ENCODE measurements at regions of chr13 and their contacts with region 1.

Region 1: DNA sequence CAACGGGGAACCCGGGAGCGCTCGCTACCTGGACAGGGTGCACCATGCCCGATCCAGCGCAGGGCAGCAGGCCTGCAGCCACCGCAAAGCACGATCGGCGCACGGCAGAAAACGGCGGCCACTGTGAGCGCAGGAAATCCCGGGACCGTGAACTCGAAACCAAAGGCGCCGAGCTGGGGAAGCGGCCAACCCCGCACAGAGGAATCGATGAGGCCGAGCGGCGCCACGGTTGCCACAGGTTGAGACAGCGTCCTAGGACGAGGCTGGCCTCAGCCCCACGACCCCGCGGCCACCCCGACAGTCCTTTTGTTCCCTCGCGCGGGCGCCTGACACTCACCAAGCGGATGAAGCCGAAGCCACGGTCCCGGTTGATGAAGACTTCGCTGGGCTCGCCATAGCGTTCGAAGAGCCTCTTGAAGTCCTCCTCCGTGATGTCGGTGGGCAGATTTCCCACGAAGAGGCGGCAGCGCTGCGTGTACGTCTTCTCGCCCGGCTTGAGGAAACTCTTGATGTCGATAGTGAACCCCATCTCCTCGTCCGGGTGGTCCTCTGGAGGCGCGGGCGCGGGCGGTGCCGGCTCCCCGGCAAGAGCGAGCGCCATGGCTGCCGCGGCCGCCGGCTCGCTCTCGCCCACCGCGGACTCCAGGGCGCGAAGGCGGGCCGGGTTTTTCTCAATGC is 557 bp downstream of the PSPC1 start:
- DNase-seq: peak in 1 of 2 donors; percentile 70
- H3K4me3 ChIP-seq: peak overlapping the region; percentile 77 to 83
- H3K27ac ChIP-seq: peak overlapping the region; percentile 89 to 95
- H3K4me1 ChIP-seq: peaks cover 0 to 6% of the 10 kb centered on the region in 2 donors
- H3K27me3 ChIP-seq: no peaks in the 10 kb centered on the region
- CTCF ChIP-seq: no peak

Region 2: GRCh38 chr13:19382111-19382510 is 400.1 kb before region 1 on chr13:
- intact Hi-C with region 1: no loop called
- DNase-seq: no peak
- H3K4me3 ChIP-seq: no peak overlapping the region
- H3K27ac ChIP-seq: no peak overlapping the region
- H3K4me1 ChIP-seq: no peaks in the 10 kb centered on the region
- H3K27me3 ChIP-seq: no peaks in the 10 kb centered on the region
- CTCF ChIP-seq: no peak

Region 3: GRCh38 chr13:19633479-19634255 is 148.5 kb before region 1 on chr13 and contains the start of gene MPHOSPH8:
- intact Hi-C with region 1: loop called (anchors 2 kb)
- DNase-seq: peak; percentile 80 to 97
- H3K4me3 ChIP-seq: peak within 1 kb of the TSS; percentile 71 to 93
- H3K27ac ChIP-seq: peak within 1 kb of the TSS; percentile 92 to 93
- H3K4me1 ChIP-seq: peaks cover 5 to 23% of the 10 kb centered on the region in 2 donors
- H3K27me3 ChIP-seq: no peaks in the 10 kb centered on the region
- CTCF ChIP-seq: no peak
- total RNA-seq, gene MPHOSPH8: 18.5 TPM

Region 4: GRCh38 chr13:19845758-19846157 is 63.6 kb after region 1 on chr13:
- intact Hi-C with region 1: loop called (anchors 5 kb)
- DNase-seq: peak in 1 of 2 donors; percentile 73
- H3K4me3 ChIP-seq: no peak overlapping the region
- H3K27ac ChIP-seq: peak overlapping the region; percentile 38 to 47
- H3K4me1 ChIP-seq: peaks cover 0 to 26% of the 10 kb centered on the region in 2 donors
- H3K27me3 ChIP-seq: no peaks in the 10 kb centered on the region
- CTCF ChIP-seq: no peak

Measured in ascending aorta (tissue), 2 donors.